ENCODE measurements at regions of chr5 and their contacts with region 1.

Region 1: GRCh38 chr5:177454397-177455035 is 7.9 kb downstream of the PRR7 start:
- DNase-seq: peak; percentile 89 to 99
- ATAC-seq: peak; percentile 37 to 63
- H3K4me3 ChIP-seq: peak overlapping the region; percentile 61
- H3K27ac ChIP-seq: peak overlapping the region; percentile 71 to 86
- H3K4me1 ChIP-seq: peaks cover 10% of the 10 kb centered on the region
- CTCF ChIP-seq: peak; percentile 94
- EP300 ChIP-seq: no peak
- POLR2A ChIP-seq: no peak
- RAD21 ChIP-seq: peak; percentile 72 to 92

Region 2: DNA sequence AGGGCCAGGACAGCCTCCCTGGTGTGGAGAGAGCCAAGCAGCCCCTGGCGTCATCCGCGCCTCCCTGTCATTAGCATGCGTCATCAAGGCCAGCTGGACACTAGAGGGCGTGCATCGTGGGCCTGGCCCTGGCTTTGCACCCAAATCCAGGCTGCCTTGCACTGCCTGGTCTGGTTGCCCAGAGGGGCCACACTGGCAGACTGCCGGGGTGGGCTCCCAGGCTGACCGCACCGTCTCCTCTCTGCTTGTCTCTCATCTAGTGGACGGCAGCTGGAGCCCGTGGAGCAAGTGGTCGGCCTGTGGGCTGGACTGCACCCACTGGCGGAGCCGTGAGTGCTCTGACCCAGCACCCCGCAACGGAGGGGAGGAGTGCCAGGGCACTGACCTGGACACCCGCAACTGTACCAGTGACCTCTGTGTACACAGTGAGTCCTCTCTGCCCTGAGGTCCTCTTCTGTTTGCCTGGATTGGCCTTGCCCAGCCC is 584.4 kb before region 1 on chr5:
- CTCF ChIA-PET with region 1: no interaction called
- POLR2A ChIA-PET with region 1: no interaction called
- DNase-seq: peak; percentile 78 to 85
- ATAC-seq: peak; percentile 84 to 92
- H3K4me3 ChIP-seq: no peak overlapping the region
- H3K27ac ChIP-seq: no peak overlapping the region
- H3K4me1 ChIP-seq: 0 out of 3 replicates have a peak, but pooled peaks cover 8% of the 10 kb centered on the region
- CTCF ChIP-seq: peak; percentile 54
- EP300 ChIP-seq: no peak
- POLR2A ChIP-seq: no peak
- RAD21 ChIP-seq: peak in 1 of 2 experiments; percentile 44; a peak in 3 of 5 replicates

Region 3: GRCh38 chr5:177311723-177312648 is 142.5 kb before region 1 on chr5 and contains the start of gene MXD3:
- CTCF ChIA-PET with region 1: interaction called, 40 read pairs
- POLR2A ChIA-PET with region 1: no interaction called
- DNase-seq: peak; percentile 90 to 97
- ATAC-seq: peak; percentile 62 to 82
- H3K4me3 ChIP-seq: peak within 1 kb of the TSS; percentile 66
- H3K27ac ChIP-seq: peak within 1 kb of the TSS; percentile 87 to 93
- H3K4me1 ChIP-seq: peaks cover 19% of the 10 kb centered on the region; the same call in 2 of the 3 replicates
- CTCF ChIP-seq: no peak
- EP300 ChIP-seq: no peak
- POLR2A ChIP-seq: peak; percentile 22; the same call in 1 of the 2 replicates
- RAD21 ChIP-seq: no peak
- polyA plus RNA-seq, gene MXD3: 4.1 and 5.3 TPM in 2 replicates

Region 4: DNA sequence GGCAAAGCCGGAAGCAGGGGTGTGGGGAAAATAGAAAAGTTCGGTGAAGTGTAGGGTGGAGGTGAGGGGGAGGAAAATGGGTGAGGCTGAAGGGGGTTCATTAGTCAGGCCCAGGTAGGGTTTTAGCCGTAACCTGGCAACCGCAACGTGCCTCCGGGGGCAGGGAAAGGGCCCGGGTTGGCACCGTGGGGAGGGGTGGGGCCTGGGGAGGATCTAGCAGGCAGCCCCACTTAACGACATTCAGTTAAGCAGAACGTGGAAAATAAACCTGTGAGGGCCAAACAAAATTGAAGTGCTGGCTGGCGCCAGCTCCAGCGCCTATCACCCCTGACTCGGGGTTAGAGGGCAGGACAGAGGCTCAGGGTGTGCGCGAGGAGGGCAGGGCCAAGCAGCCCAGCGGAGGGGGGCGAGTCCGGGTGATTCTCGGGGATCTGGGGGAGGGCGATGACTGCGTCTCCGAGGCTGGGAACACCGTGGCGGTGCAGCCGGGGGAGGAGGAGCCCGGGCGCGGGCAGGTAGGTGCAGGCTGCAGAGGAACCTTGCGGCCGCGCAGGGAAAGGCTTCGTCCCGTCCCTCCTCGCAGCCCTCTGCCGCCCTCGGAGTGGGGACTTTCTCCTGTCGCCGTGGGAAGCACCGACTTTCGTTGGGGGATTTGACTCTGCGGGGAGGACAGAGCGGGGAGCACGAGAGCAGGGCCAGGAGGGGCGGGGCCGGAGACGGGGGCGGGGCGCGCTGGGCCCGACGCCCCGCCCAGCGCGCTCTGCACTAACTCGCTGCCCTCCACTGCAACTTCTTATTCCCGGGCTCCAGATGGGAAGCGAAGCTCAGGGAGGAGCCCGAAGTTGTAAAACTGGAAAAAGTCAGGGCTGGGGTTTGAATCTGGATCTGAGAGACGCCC is 91.7 kb before region 1 on chr5:
- CTCF ChIA-PET with region 1: interaction called, 30 read pairs
- POLR2A ChIA-PET with region 1: no interaction called
- DNase-seq: peak; percentile 47 to 79
- ATAC-seq: peak; percentile 76 to 87
- H3K4me3 ChIP-seq: peak overlapping the region; percentile 54
- H3K27ac ChIP-seq: peak overlapping the region; percentile 54 to 83; a peak in 5 of 6 replicates
- H3K4me1 ChIP-seq: peaks cover 3% of the 10 kb centered on the region; the same call in 1 of the 3 replicates
- CTCF ChIP-seq: no peak
- EP300 ChIP-seq: no peak
- POLR2A ChIP-seq: no peak
- RAD21 ChIP-seq: no peak

Region 5: DNA sequence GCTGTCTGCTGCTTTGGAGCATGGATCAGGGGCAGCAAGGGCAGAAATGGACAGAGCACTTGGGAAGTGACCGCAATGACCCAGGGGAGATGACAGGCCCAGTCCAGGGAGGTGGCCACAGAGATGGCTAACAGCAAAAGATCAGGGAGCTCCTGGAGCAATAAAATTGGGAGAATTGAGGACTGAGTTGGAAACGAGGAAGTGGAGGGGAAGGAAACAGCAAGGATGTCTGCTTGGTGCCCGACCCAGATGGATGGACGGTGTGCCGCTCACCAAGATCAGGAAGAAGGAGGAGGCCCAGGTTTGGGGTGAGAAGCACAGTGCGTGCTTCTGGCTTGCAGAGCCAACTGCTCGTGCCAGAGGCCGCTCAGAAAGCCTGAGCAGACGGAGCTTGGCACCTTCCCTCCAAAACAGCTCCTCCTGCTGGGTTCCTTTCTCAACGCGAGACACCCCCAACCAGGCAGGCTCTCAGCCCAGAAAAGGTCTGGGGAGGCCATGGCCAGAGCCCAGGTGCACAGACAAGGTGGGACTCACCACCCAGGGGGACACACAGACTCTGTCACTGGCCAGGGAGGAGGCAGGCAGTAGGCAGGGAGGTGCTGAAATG is 72.0 kb before region 1 on chr5:
- CTCF ChIA-PET with region 1: interaction called, 359 read pairs
- POLR2A ChIA-PET with region 1: no interaction called
- DNase-seq: peak in 1 of 2 experiments; percentile 59
- ATAC-seq: peak; percentile 37 to 63; a peak in 3 of 6 replicates
- H3K4me3 ChIP-seq: no peak overlapping the region
- H3K27ac ChIP-seq: peak overlapping the region in 1 of 2 experiments; percentile 3; a peak in 1 of 6 replicates
- H3K4me1 ChIP-seq: peaks cover 23% of the 10 kb centered on the region
- CTCF ChIP-seq: 0 out of 3 replicates have a peak, but pooled peaks have one; percentile 11
- EP300 ChIP-seq: no peak
- POLR2A ChIP-seq: no peak
- RAD21 ChIP-seq: 0 out of 5 replicates have a peak, but pooled peaks of 1 of the 2 experiments have one; percentile 31

Region 6: DNA sequence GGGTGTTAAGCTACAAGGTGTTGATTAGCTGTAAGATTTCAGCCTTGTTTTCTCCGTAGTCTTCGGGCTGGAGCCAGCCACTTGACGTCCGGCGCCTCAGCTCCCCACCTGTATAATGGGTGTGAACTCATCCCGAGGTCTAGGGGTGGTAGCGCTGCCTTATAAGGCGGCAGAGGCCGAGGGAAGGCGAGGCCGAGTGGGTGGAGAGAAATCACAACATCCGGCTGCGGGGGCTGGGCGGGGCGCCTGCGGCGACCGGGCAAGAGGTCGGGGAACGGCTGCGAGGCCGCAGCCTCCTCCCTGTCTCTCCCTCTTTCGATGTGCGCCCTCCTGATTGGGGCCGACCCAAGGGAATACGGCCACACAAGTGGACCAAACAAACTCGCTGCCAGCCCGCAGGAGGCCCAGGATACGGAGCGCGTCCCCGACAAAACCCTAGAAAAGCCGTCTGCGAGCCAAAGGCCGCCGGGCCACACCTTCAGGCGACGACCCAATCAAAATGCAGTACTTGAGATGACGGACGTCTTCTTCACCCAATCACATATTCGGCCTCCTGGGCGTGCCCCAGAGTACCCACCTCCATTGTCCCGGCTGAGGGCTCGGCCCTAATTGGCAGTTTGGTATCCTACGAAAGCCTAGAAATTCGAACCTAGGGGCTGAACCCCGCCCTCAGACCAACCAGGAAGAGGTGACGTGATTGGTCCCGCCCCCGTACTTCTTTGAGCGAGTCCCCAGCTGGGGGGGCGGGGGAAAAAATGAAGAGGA is 28.5 kb before region 1 on chr5:
- CTCF ChIA-PET with region 1: interaction called, 871 read pairs
- POLR2A ChIA-PET with region 1: interaction called, 5 read pairs
- DNase-seq: peak; percentile 99 to 100
- ATAC-seq: peak; percentile 82 to 95
- H3K4me3 ChIP-seq: peak overlapping the region; percentile 44
- H3K27ac ChIP-seq: peak overlapping the region; percentile 82 to 87
- H3K4me1 ChIP-seq: peaks cover 17% of the 10 kb centered on the region
- CTCF ChIP-seq: no peak
- EP300 ChIP-seq: no peak
- POLR2A ChIP-seq: no peak; the same call in none of the 2 replicates
- RAD21 ChIP-seq: no peak

Region 7: GRCh38 chr5:177497292-177498033 is 42.9 kb after region 1 on chr5 and contains the start of gene PDLIM7:
- CTCF ChIA-PET with region 1: interaction called, 354 read pairs
- POLR2A ChIA-PET with region 1: interaction called, 7 read pairs
- DNase-seq: peak; percentile 97
- ATAC-seq: peak; percentile 40 to 80
- H3K4me3 ChIP-seq: peak within 1 kb of the TSS; percentile 63
- H3K27ac ChIP-seq: peak within 1 kb of the TSS; percentile 82 to 95
- H3K4me1 ChIP-seq: peaks cover 51% of the 10 kb centered on the region
- CTCF ChIP-seq: no peak
- EP300 ChIP-seq: no peak
- POLR2A ChIP-seq: peak; percentile 91
- RAD21 ChIP-seq: no peak
- polyA plus RNA-seq, gene PDLIM7: 26.1 and 30.7 TPM in 2 replicates

Region 8: DNA sequence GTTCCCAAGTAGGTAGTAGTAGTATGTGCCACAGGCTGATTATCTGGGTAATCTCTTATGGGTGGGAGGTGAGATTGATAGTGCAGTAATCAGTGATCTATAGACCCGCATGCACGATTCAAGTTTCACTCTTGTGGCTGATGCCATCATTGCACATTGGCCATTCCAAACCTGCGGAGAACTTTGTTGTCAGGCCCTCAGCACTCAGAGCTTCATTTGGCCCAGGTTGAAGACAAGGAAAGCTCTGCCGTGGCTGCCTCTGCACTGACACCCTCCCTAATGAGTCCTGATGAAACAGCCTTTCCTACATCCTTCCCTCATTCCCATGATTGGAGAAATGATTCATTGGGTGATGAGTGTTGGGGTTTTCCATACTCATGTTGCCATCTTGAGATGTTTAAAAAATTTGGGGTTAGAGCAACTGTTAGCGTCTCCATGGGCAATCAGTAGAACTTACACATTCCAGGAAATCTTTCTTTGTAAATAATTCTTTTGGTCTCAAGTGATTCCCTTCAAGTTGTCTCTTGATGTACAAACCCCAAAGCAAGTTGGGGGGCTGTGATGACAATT is 518.6 kb after region 1 on chr5:
- CTCF ChIA-PET with region 1: no interaction called
- POLR2A ChIA-PET with region 1: no interaction called
- DNase-seq: no peak
- ATAC-seq: no peak
- H3K4me3 ChIP-seq: no peak overlapping the region
- H3K27ac ChIP-seq: no peak overlapping the region
- H3K4me1 ChIP-seq: no peaks in the 10 kb centered on the region
- CTCF ChIP-seq: no peak
- EP300 ChIP-seq: no peak
- POLR2A ChIP-seq: no peak
- RAD21 ChIP-seq: no peak